Posterior vena cava (tissue), 2 donors: ENCODE measurements at regions of chr2 and their contacts with region 1.

Region 1: GRCh38 chr2:176473177-176473576 is 203.9 kb downstream of the MTX2 start:
- DNase-seq: no peak

Region 2: GRCh38 chr2:176554101-176555048 is 81.2 kb after region 1 on chr2:
- intact Hi-C with region 1: loop called in 1 of 2 experiments (anchors 1 kb)
- DNase-seq: no peak